CD4-positive, alpha-beta memory T cell (primary cell): ENCODE measurements at regions of chr2 and their contacts with region 1.

Region 1: GRCh38 chr2:100924520-100925451 is 77.3 kb upstream of the RPL31 start:
- DNase-seq: peak; percentile 44 to 64 (median 55)
- H3K4me3 ChIP-seq: peak overlapping the region in 1 of 2 donors; percentile 46
- H3K4me3 Mint-ChIP-seq: peak overlapping the region; percentile 59 to 81 (median 76)
- H3K27ac ChIP-seq: peak overlapping the region; percentile 58
- H3K27ac Mint-ChIP-seq: peak overlapping the region; percentile 84 to 97 (median 93)
- H3K4me1 ChIP-seq: peaks cover 11% of the 10 kb centered on the region
- H3K4me1 Mint-ChIP-seq: peaks cover 16 to 21% (median 18%) of the 10 kb centered on the region in 4 donors
- H3K27me3 ChIP-seq: no peaks in the 10 kb centered on the region
- H3K27me3 Mint-ChIP-seq: no peaks in the 10 kb centered on the region

Region 2: DNA sequence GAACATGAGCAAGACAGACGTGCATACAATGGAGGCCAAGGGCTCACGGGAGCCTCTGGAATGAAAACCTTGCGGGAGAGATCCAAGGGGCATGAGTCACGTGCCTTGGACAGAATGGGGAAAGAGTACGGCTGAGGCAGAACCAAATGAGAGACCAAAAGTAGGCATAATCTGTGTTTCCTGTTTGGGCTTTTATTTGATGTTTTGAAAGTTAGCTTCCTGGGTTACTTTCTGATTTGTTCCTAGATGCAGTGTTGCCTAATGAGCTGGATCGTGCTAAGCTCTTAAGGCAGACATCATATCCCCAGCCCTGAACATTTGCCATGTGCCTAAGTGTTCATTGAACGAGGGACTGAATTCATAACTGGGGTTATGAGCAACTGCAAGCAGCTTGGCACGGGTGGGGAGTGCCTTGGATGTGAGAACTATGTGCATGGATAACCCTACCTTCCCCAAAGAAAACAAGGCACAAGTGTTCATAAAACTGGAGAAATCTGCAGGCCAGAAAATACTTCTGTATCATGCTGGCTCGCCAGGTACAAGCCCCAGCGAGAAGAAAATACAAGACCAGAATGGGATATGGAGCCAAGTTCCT is 17.0 kb after region 1 on chr2:
- CTCF ChIA-PET with region 1: interaction called, 7 read pairs
- POLR2A ChIA-PET with region 1: interaction called, 15 read pairs
- intact Hi-C with region 1: no loop called
- DNase-seq: peak in 2 of 5 donors; percentile 12 to 13
- H3K4me3 ChIP-seq: peak overlapping the region in 1 of 2 donors; percentile 44
- H3K4me3 Mint-ChIP-seq: peak overlapping the region; percentile 64 to 89 (median 83)
- H3K27ac ChIP-seq: no peak overlapping the region
- H3K27ac Mint-ChIP-seq: peak overlapping the region; percentile 70 to 91 (median 80)
- H3K4me1 ChIP-seq: peaks cover 16% of the 10 kb centered on the region
- H3K4me1 Mint-ChIP-seq: peaks cover 18 to 25% (median 23%) of the 10 kb centered on the region in 4 donors
- H3K27me3 ChIP-seq: no peaks in the 10 kb centered on the region
- H3K27me3 Mint-ChIP-seq: peaks cover under 1 to 2% of the 10 kb centered on the region in 2 donors

Region 3: DNA sequence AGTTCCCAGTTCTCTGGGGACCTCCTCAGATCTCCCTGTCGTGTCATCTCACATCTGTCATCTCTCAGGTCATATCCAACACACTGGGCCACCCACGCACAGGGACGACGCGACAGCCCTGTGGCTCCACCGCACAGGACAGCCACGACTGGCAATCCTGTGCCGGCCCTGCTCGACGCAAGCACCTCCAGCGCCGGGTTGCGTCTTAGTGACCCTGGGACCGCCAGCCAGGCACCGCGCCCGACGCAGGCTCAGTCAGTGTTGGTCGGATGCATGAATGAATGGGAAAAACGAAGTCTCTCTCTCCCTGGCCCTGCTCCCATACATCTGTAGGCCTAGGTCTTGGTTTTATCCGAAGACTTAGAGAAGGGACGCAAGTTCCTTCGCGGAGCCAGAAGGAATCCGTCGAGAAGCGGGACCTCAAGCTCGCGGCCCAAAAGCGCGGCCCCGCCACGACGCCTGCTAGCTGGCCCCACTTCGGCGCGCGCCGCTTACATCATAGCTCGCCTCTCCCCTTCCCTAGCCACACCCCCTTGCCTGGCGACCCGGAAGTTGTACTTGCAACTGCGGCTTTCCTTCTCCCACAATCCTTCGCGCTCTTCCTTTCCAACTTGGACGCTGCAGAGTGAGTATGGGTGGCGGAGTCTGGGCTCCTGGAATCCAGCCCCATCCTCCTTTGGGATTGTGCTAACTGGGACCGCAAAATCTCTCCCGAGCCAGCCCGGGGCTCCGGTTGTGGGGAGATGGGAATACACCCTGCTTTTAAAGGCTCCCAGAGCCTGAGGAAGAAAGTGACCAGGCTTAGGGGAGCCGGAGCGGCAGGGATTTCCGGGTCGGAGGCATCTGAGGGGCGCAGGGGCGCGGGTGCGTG is 77.1 kb after region 1 on chr2 and contains the start of gene RPL31:
- CTCF ChIA-PET with region 1: no interaction called
- POLR2A ChIA-PET with region 1: interaction called, 12 read pairs
- intact Hi-C with region 1: no loop called
- DNase-seq: peak; percentile 93 to 98 (median 96)
- H3K4me3 ChIP-seq: peak within 1 kb of the TSS; percentile 97 to 98
- H3K4me3 Mint-ChIP-seq: peak within 1 kb of the TSS; percentile 90 to 96 (median 95)
- H3K27ac ChIP-seq: peak within 1 kb of the TSS; percentile 91
- H3K27ac Mint-ChIP-seq: peak within 1 kb of the TSS; percentile 91 to 99 (median 98)
- H3K4me1 ChIP-seq: peaks cover 37% of the 10 kb centered on the region
- H3K4me1 Mint-ChIP-seq: peaks cover 32 to 51% (median 45%) of the 10 kb centered on the region in 4 donors
- H3K27me3 ChIP-seq: no peaks in the 10 kb centered on the region
- H3K27me3 Mint-ChIP-seq: no peaks in the 10 kb centered on the region
- total RNA-seq, gene RPL31: 2,455 to 2,531 TPM

Region 4: GRCh38 chr2:101546376-101547058 is 621.7 kb after region 1 on chr2:
- CTCF ChIA-PET with region 1: no interaction called
- POLR2A ChIA-PET with region 1: no interaction called
- intact Hi-C with region 1: no loop called
- DNase-seq: no peak
- H3K4me3 ChIP-seq: no peak overlapping the region
- H3K4me3 Mint-ChIP-seq: no peak overlapping the region
- H3K27ac ChIP-seq: no peak overlapping the region
- H3K27ac Mint-ChIP-seq: no peak overlapping the region
- H3K4me1 ChIP-seq: peaks cover 5% of the 10 kb centered on the region
- H3K4me1 Mint-ChIP-seq: peaks cover 6 to 8% (median 8%) of the 10 kb centered on the region in 4 donors
- H3K27me3 ChIP-seq: no peaks in the 10 kb centered on the region
- H3K27me3 Mint-ChIP-seq: peaks cover 0 to 3% of the 10 kb centered on the region in 2 donors